CD4-positive, alpha-beta T cell (primary cell): ENCODE measurements at regions of chr3 and their contacts with region 1.

Region 1: GRCh38 chr3:196609343-196609775 is 30.1 kb upstream of the NRROS start:
- DNase-seq: peak; percentile 89 to 98 (median 94)
- ATAC-seq: peak; percentile 74
- H3K4me3 ChIP-seq: peak overlapping the region; percentile 3
- H3K4me3 Mint-ChIP-seq: peak overlapping the region; percentile 69
- H3K27ac ChIP-seq: peak overlapping the region in 1 of 2 donors; percentile 50
- H3K27ac Mint-ChIP-seq: peak overlapping the region; percentile 74
- H3K4me1 ChIP-seq: peaks cover 42% of the 10 kb centered on the region
- H3K4me1 Mint-ChIP-seq: peaks cover 46% of the 10 kb centered on the region
- H3K27me3 ChIP-seq: no peaks in the 10 kb centered on the region
- H3K27me3 Mint-ChIP-seq: no peaks in the 10 kb centered on the region
- CTCF ChIP-seq: peak; percentile 99

Region 2: GRCh38 chr3:196502775-196503195 is 106.6 kb before region 1 on chr3:
- CTCF ChIA-PET with region 1: no interaction called
- POLR2A ChIA-PET with region 1: no interaction called
- intact Hi-C with region 1: no loop called
- DNase-seq: peak; percentile 36 to 88 (median 51)
- ATAC-seq: peak; percentile 62
- H3K4me3 ChIP-seq: peak overlapping the region; percentile 100
- H3K4me3 Mint-ChIP-seq: peak overlapping the region; percentile 99
- H3K27ac ChIP-seq: peak overlapping the region; percentile 85 to 86
- H3K27ac Mint-ChIP-seq: peak overlapping the region; percentile 96
- H3K4me1 ChIP-seq: peaks cover 29% of the 10 kb centered on the region
- H3K4me1 Mint-ChIP-seq: peaks cover 45% of the 10 kb centered on the region
- H3K27me3 ChIP-seq: no peaks in the 10 kb centered on the region
- H3K27me3 Mint-ChIP-seq: no peaks in the 10 kb centered on the region
- CTCF ChIP-seq: no peak

Region 3: DNA sequence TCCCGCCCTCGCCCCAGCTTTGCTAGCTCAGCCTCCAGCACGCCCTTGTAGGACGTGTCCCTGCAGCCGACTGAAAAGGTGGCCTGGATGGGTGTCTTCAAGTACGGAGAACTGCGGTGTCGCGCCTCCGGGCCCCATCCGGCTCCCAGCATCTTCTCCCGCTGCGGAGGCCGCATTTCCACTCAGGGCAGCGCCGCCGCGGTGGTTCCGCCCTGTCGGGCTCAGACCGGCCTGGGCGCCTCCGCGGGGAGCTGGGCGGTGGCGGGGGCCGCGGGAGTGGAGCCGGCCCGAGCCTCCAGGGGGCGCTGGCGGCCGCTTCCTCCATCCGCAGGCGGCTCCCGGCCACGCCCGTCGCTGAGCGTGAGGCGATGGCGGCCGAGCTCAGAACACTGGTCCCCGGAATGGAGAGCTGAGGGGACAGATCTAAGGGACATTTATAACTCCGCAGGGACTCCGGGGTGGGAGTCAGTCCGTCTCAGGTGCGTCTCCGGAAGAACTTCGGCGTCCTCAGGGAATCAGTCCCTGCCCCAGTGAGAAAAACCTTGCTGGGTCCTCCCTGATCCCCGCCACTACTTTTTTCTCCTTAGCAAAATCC is 80.6 kb before region 1 on chr3:
- CTCF ChIA-PET with region 1: interaction called, 10 read pairs
- POLR2A ChIA-PET with region 1: no interaction called
- intact Hi-C with region 1: no loop called
- DNase-seq: peak; percentile 48 to 88 (median 72)
- ATAC-seq: peak; percentile 95
- H3K4me3 ChIP-seq: peak overlapping the region; percentile 52
- H3K4me3 Mint-ChIP-seq: peak overlapping the region; percentile 60
- H3K27ac ChIP-seq: no peak overlapping the region
- H3K27ac Mint-ChIP-seq: no peak overlapping the region
- H3K4me1 ChIP-seq: peaks cover 9% of the 10 kb centered on the region
- H3K4me1 Mint-ChIP-seq: peaks cover 4% of the 10 kb centered on the region
- H3K27me3 ChIP-seq: no peaks in the 10 kb centered on the region
- H3K27me3 Mint-ChIP-seq: no peaks in the 10 kb centered on the region
- CTCF ChIP-seq: peak; percentile 77

Region 4: DNA sequence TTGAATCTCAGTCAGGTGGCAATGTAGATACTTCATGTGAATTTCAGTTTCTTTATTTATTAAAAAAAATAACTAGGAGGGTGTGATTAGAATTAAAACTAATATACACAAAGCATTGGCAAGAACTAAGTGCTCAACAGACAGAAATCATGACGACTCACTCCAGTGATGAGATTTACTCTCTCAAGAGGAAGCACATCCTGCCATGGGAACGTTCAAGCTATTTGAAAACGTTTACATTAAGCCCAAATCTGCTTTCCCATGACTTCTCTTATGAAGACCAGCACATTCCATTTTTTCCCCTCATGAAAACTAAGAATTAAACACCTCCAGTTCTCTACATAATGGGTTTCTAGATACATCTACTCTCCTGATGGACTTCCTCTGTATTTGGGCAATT is 49.5 kb before region 1 on chr3:
- CTCF ChIA-PET with region 1: no interaction called
- POLR2A ChIA-PET with region 1: no interaction called
- intact Hi-C with region 1: no loop called
- DNase-seq: peak in 1 of 14 experiments; percentile 33
- ATAC-seq: no peak
- H3K4me3 ChIP-seq: no peak overlapping the region
- H3K4me3 Mint-ChIP-seq: no peak overlapping the region
- H3K27ac ChIP-seq: no peak overlapping the region
- H3K27ac Mint-ChIP-seq: no peak overlapping the region
- H3K4me1 ChIP-seq: peaks cover 22% of the 10 kb centered on the region
- H3K4me1 Mint-ChIP-seq: peaks cover 46% of the 10 kb centered on the region
- H3K27me3 ChIP-seq: no peaks in the 10 kb centered on the region
- H3K27me3 Mint-ChIP-seq: no peaks in the 10 kb centered on the region
- CTCF ChIP-seq: no peak

Region 5: DNA sequence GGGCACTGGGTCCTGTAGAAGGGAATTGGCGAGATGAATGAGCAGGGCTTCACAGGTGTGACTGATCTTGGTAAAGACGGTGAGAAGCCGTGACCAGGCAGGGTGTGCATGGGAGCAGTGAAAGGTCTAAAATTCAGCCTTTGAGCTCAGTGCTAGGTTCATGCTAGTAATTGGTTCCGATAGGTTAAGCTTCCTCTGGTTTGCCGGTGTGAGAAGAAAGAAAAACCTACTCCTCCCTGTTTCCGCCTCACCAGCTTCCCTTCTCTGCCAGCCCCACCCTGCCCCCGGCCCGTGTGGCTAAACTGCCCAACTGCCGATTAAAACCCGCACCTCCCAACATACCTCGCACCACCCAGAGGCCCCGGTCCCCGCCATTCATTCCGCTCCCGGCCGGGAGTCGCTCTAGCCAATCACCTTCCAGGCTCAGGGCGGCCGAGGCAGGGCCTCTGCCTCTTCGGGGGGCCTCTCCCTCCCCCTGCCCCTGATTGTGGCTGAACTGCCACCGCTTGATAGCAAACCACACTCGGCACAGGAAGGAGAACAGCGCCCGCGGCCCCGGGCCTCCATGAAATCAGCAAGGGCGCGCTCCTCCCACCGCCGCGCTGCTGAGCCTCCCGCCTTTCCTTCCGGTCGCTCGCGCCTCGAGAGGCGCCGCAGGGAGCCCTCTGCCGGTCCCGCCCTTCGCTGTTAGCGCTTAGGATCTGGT is 22.8 kb after region 1 on chr3:
- CTCF ChIA-PET with region 1: interaction called, 23 read pairs
- POLR2A ChIA-PET with region 1: interaction called, 80 read pairs
- intact Hi-C with region 1: loop called (anchors 1 kb)
- DNase-seq: peak; percentile 72 to 96 (median 87)
- ATAC-seq: peak; percentile 83
- H3K4me3 ChIP-seq: peak overlapping the region; percentile 72
- H3K4me3 Mint-ChIP-seq: peak overlapping the region; percentile 90
- H3K27ac ChIP-seq: peak overlapping the region; percentile 90
- H3K27ac Mint-ChIP-seq: peak overlapping the region; percentile 94
- H3K4me1 ChIP-seq: peaks cover 69% of the 10 kb centered on the region
- H3K4me1 Mint-ChIP-seq: peaks cover 67% of the 10 kb centered on the region
- H3K27me3 ChIP-seq: no peaks in the 10 kb centered on the region
- H3K27me3 Mint-ChIP-seq: no peaks in the 10 kb centered on the region
- CTCF ChIP-seq: no peak

Region 6: GRCh38 chr3:196645096-196645495 is 35.7 kb after region 1 on chr3:
- CTCF ChIA-PET with region 1: interaction called, 25 read pairs
- POLR2A ChIA-PET with region 1: interaction called, 29 read pairs
- intact Hi-C with region 1: no loop called
- DNase-seq: peak in 2 of 14 experiments; percentile 23 to 45
- ATAC-seq: no peak
- H3K4me3 ChIP-seq: no peak overlapping the region
- H3K4me3 Mint-ChIP-seq: no peak overlapping the region
- H3K27ac ChIP-seq: no peak overlapping the region
- H3K27ac Mint-ChIP-seq: peak overlapping the region; percentile 91
- H3K4me1 ChIP-seq: peaks cover 88% of the 10 kb centered on the region
- H3K4me1 Mint-ChIP-seq: peaks cover 70% of the 10 kb centered on the region
- H3K27me3 ChIP-seq: no peaks in the 10 kb centered on the region
- H3K27me3 Mint-ChIP-seq: no peaks in the 10 kb centered on the region
- CTCF ChIP-seq: no peak

Region 7: GRCh38 chr3:196942226-196942914 is 333.0 kb after region 1 on chr3 and contains the start of gene NCBP2:
- CTCF ChIA-PET with region 1: interaction called, 4 read pairs
- POLR2A ChIA-PET with region 1: interaction called, 5 read pairs
- intact Hi-C with region 1: loop called in 1 of 2 experiments (anchors 10 kb)
- DNase-seq: peak; percentile 98 to 100 (median 99)
- ATAC-seq: peak; percentile 92
- H3K4me3 ChIP-seq: peak within 1 kb of the TSS; percentile 89
- H3K4me3 Mint-ChIP-seq: peak within 1 kb of the TSS; percentile 99
- H3K27ac ChIP-seq: peak within 1 kb of the TSS; percentile 94 to 97
- H3K27ac Mint-ChIP-seq: peak within 1 kb of the TSS; percentile 96
- H3K4me1 ChIP-seq: peaks cover 24% of the 10 kb centered on the region
- H3K4me1 Mint-ChIP-seq: peaks cover 51% of the 10 kb centered on the region
- H3K27me3 ChIP-seq: no peaks in the 10 kb centered on the region
- H3K27me3 Mint-ChIP-seq: no peaks in the 10 kb centered on the region
- CTCF ChIP-seq: peak; percentile 59
- total RNA-seq, gene NCBP2: 41.4 to 44.6 TPM

Region 8: GRCh38 chr3:197062446-197062845 is 453.1 kb after region 1 on chr3:
- CTCF ChIA-PET with region 1: no interaction called
- POLR2A ChIA-PET with region 1: no interaction called
- intact Hi-C with region 1: no loop called
- DNase-seq: no peak
- ATAC-seq: no peak
- H3K4me3 ChIP-seq: no peak overlapping the region
- H3K4me3 Mint-ChIP-seq: no peak overlapping the region
- H3K27ac ChIP-seq: no peak overlapping the region
- H3K27ac Mint-ChIP-seq: no peak overlapping the region
- H3K4me1 ChIP-seq: no peaks in the 10 kb centered on the region
- H3K4me1 Mint-ChIP-seq: no peaks in the 10 kb centered on the region
- H3K27me3 ChIP-seq: no peaks in the 10 kb centered on the region
- H3K27me3 Mint-ChIP-seq: no peaks in the 10 kb centered on the region
- CTCF ChIP-seq: no peak